ENCODE measurements at regions of chr2 and their contacts with region 1.

Region 1: DNA sequence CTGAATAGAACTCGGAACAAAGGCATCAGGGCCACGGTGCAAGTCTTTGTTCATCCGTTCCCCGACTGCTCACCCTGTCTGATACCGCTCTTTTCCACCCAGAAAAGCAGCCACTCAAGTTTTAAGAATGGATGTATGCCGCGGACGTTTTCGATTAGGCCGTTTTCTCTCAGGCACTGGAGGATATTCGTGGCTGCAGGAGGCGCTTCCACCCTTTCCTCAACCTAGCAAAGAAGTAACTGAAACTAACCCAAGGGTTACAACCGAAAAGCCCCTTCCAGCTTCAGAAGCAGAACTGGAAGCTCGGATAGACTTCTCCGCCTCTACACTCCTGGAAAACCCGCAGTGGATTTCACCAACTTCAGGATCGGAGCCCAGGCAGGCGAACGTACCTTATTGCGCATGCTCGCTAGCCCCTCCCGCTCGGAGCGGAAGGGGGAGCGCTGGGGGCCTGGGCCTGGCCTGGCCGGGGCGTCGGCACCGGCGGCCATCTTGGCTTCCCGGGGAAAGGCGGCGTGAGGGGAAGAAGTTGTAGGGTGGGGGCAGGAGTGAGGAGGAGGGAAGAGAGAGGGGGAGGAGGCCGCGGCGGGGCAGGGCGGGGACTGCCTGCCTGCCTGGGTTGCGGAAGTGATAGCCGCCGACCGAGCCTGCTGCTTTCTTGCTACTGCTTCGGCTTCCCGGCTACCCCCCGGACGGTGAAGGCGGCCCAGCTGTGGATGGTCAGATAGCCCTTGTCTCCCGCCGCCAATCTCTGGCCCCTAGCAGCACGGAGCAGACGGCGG is at the start of gene ACTR3:
- DNase-seq: peak; percentile 96 to 99 (median 97)
- ATAC-seq: peak; percentile 84
- H3K4me3 ChIP-seq: peak within 1 kb of the TSS; percentile 86
- H3K4me3 Mint-ChIP-seq: peak within 1 kb of the TSS; percentile 98
- H3K27ac ChIP-seq: peak within 1 kb of the TSS; percentile 96 to 98
- H3K27ac Mint-ChIP-seq: peak within 1 kb of the TSS; percentile 94
- H3K4me1 ChIP-seq: peaks cover 40% of the 10 kb centered on the region
- H3K4me1 Mint-ChIP-seq: peaks cover 85% of the 10 kb centered on the region
- H3K27me3 ChIP-seq: no peaks in the 10 kb centered on the region
- H3K27me3 Mint-ChIP-seq: no peaks in the 10 kb centered on the region
- CTCF ChIP-seq: no peak
- total RNA-seq, gene ACTR3: 118 to 123 TPM

Region 2: GRCh38 chr2:112187805-112188596 is 1701.7 kb before region 1 on chr2:
- CTCF ChIA-PET with region 1: no interaction called
- POLR2A ChIA-PET with region 1: no interaction called
- intact Hi-C with region 1: loop called in 1 of 2 experiments (anchors 10 kb)
- DNase-seq: peak; percentile 59 to 93 (median 72)
- ATAC-seq: peak; percentile 82
- H3K4me3 ChIP-seq: peak overlapping the region; percentile 28
- H3K4me3 Mint-ChIP-seq: peak overlapping the region; percentile 56
- H3K27ac ChIP-seq: peak overlapping the region; percentile 90 to 96
- H3K27ac Mint-ChIP-seq: peak overlapping the region; percentile 94
- H3K4me1 ChIP-seq: peaks cover 79% of the 10 kb centered on the region
- H3K4me1 Mint-ChIP-seq: peaks cover 84% of the 10 kb centered on the region
- H3K27me3 ChIP-seq: no peaks in the 10 kb centered on the region
- H3K27me3 Mint-ChIP-seq: no peaks in the 10 kb centered on the region
- CTCF ChIP-seq: no peak

Region 3: DNA sequence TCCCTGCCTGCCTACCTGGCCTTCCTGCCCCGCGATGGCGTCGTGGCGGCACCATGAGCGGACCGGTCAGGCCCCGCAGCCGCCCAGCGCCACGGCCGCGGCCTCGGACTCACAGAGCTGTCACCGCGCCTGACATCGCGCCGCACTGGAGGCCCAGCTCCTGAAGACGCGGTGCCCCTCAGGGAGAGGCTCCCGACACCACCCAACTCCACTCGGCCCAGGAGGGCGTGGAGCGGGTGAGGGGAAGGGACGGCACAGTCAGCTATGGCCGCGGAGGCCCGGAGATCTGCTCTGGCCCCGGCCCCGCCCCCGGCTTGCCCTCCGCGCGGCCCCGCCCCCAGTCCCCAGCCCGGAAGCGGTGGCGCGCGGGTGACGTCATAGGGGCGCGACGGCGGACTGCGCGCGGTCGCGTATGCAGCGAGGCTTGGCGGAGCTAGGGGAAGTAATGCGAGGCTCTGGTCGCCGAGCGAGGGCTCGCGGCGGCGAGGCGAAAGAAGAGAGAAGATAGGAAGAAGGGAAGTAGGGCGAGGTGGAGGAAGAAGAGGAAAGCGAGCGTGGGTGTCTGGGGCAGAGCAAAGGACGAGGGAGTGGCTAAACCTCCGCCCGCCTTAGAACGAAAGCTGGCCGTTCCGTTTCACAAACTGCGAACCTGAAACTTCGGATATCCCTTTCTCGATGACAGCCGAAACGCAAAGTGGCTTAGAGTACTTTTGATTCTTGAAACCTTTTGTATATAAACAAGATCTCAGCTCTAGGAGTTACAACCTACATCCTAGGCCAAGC is 133.1 kb before region 1 on chr2 and contains the start of gene SLC35F5:
- CTCF ChIA-PET with region 1: no interaction called
- POLR2A ChIA-PET with region 1: interaction called, 48 read pairs
- intact Hi-C with region 1: loop called (anchors 2 kb)
- DNase-seq: peak; percentile 84 to 97 (median 92)
- ATAC-seq: peak; percentile 90
- H3K4me3 ChIP-seq: peak within 1 kb of the TSS; percentile 74
- H3K4me3 Mint-ChIP-seq: peak within 1 kb of the TSS; percentile 94
- H3K27ac ChIP-seq: peak within 1 kb of the TSS; percentile 84 to 95
- H3K27ac Mint-ChIP-seq: peak within 1 kb of the TSS; percentile 95
- H3K4me1 ChIP-seq: peaks cover 14% of the 10 kb centered on the region
- H3K4me1 Mint-ChIP-seq: peaks cover 33% of the 10 kb centered on the region
- H3K27me3 ChIP-seq: no peaks in the 10 kb centered on the region
- H3K27me3 Mint-ChIP-seq: no peaks in the 10 kb centered on the region
- CTCF ChIP-seq: no peak
- total RNA-seq, gene SLC35F5: 18.3 to 19.2 TPM

Region 4: DNA sequence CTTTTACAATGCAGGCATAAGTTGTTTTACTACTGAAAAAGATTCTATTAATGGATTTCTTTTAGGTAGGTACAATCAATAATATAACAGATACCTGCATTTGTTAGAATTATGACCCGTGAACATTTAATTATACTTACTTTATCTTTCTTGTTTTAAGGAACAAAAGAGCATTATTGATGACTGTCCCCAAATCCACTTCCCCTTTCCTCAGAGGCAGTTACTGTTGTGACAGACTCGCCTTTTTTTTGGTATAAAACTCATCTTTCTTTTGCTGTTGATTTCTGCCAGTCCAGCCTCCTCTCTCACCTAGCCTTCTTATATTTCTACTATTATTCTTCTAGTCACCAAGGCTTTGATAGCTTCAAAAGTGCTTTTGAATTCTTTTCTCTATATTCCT is 12.3 kb after region 1 on chr2:
- CTCF ChIA-PET with region 1: interaction called, 5 read pairs
- POLR2A ChIA-PET with region 1: interaction called, 9 read pairs
- intact Hi-C with region 1: loop called in 1 of 2 experiments (anchors 2 kb)
- DNase-seq: peak in 2 of 14 experiments; percentile 36 to 38
- ATAC-seq: no peak
- H3K4me3 ChIP-seq: no peak overlapping the region
- H3K4me3 Mint-ChIP-seq: peak overlapping the region; percentile 64
- H3K27ac ChIP-seq: no peak overlapping the region
- H3K27ac Mint-ChIP-seq: peak overlapping the region; percentile 91
- H3K4me1 ChIP-seq: peaks cover 40% of the 10 kb centered on the region
- H3K4me1 Mint-ChIP-seq: peaks cover 98% of the 10 kb centered on the region
- H3K27me3 ChIP-seq: no peaks in the 10 kb centered on the region
- H3K27me3 Mint-ChIP-seq: no peaks in the 10 kb centered on the region
- CTCF ChIP-seq: no peak

Region 5: DNA sequence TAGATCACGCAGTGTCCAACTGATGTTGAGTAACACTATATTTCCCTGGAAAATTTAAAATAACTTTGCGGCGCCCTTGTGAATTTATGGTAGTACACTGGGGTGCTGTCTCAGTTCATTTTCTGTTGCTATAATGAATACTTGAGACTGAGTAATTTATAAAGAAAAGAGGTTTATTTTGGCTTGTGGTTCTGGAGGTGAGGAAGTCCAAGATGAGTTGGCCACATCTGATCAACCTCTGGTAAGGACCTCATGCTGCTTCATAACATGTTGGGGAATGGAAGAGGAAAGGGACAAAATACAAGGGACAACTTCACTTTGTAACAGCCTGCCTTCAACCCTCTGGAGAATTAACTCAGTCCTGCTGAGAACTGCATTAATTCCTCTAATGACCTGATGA is 36.7 kb after region 1 on chr2:
- CTCF ChIA-PET with region 1: no interaction called
- POLR2A ChIA-PET with region 1: no interaction called
- intact Hi-C with region 1: loop called in 1 of 2 experiments (anchors 5 kb)
- DNase-seq: no peak
- ATAC-seq: no peak
- H3K4me3 ChIP-seq: no peak overlapping the region
- H3K4me3 Mint-ChIP-seq: no peak overlapping the region
- H3K27ac ChIP-seq: no peak overlapping the region
- H3K27ac Mint-ChIP-seq: no peak overlapping the region
- H3K4me1 ChIP-seq: peaks cover 4% of the 10 kb centered on the region
- H3K4me1 Mint-ChIP-seq: peaks cover 33% of the 10 kb centered on the region
- H3K27me3 ChIP-seq: no peaks in the 10 kb centered on the region
- H3K27me3 Mint-ChIP-seq: no peaks in the 10 kb centered on the region
- CTCF ChIP-seq: no peak

Region 6: DNA sequence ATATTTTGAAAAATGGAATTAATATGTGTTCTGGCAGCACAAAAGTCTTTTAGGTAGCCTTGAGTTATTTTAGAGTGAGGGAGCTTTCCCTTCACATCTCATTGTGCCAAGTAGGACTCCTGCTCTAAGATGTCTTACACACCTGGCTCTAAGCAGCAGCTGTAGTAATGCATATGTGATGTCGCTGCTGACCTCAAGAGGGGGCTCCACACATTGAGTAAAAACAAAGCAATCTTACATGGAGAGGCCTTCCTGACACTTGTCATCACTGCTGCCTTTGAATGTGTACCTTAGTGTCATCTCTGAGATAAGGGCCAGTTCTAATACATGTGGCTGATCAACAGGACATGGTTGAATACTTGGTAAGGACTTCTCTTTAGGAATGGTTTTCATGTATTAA is 76.0 kb after region 1 on chr2:
- CTCF ChIA-PET with region 1: no interaction called
- POLR2A ChIA-PET with region 1: no interaction called
- intact Hi-C with region 1: no loop called
- DNase-seq: peak in 8 of 14 experiments; percentile 10 to 64 (median 31)
- ATAC-seq: peak; percentile 98
- H3K4me3 ChIP-seq: no peak overlapping the region
- H3K4me3 Mint-ChIP-seq: no peak overlapping the region
- H3K27ac ChIP-seq: no peak overlapping the region
- H3K27ac Mint-ChIP-seq: peak overlapping the region; percentile 68
- H3K4me1 ChIP-seq: no peaks in the 10 kb centered on the region
- H3K4me1 Mint-ChIP-seq: peaks cover 22% of the 10 kb centered on the region
- H3K27me3 ChIP-seq: no peaks in the 10 kb centered on the region
- H3K27me3 Mint-ChIP-seq: no peaks in the 10 kb centered on the region
- CTCF ChIP-seq: peak; percentile 53